ENCODE measurements at regions of chr2 and their contacts with region 1.

Region 1: GRCh38 chr2:20304411-20304810 is 46.2 kb downstream of the PUM2 start:
- DNase-seq: no peak
- H3K27ac ChIP-seq: no peak overlapping the region
- CTCF ChIP-seq: no peak

Region 2: DNA sequence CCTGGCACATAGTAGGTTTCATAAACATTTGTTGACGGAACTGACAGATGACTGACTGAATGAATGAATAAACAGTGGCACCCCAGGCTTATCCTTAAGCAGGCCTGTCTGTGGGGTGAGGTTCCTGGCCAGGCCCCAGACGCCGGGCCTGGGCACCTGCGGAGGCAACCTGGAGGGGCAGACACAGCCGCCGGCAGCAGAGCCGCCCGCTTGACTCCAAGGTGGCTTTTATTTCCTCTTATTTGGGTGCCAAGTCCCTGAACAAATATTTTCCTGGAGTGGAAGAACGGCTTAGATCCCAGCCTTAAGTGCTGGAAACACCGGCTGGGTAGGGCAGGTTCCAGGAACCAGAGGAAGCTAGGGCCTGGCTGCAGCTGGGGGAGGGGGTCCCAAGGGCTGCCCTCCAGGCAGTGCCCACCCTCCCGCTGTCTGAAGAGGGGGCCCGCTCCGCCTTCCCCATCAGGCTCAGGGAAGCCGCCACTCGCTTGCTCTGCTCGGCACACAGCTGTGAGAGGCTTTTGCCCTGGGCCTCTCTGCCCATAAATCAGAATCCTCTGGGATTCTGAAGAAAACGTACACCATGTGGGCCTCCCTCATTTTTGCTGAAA is 107.8 kb before region 1 on chr2:
- CTCF ChIA-PET with region 1: no interaction called
- POLR2A ChIA-PET with region 1: no interaction called
- DNase-seq: no peak
- H3K27ac ChIP-seq: peak overlapping the region; percentile 54
- CTCF ChIP-seq: no peak

Region 3: DNA sequence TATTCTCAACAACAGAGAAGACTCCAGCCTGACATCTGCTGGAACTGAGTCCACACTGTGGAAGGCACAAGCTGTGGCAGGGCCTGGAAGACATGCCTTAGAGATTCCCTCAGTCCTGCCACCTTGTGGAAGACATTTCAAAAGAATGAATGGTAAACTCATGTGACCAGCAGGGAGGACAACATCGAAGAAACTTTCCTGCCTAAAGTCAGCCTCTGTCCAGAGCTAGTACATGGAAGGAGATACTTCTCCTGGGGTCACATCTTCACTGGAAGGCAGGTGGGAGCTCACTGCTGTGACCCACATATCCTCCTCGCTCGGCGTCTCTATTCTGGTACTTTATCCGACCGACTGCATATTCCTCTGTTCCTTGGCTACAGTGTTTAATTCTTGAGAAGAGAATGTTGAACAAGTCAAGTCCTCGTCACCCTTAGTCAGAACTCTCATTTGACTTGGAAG is 13.3 kb before region 1 on chr2:
- CTCF ChIA-PET with region 1: interaction called, 14 read pairs
- POLR2A ChIA-PET with region 1: no interaction called
- DNase-seq: peak; percentile 88
- H3K27ac ChIP-seq: no peak overlapping the region; the same call in 1 of the 2 replicates
- CTCF ChIP-seq: peak; percentile 68

Measured in RWPE1 (cell line).